Heart right ventricle (tissue), 16 donors: ENCODE measurements at regions of chr1 and their contacts with region 1.

Region 1: DNA sequence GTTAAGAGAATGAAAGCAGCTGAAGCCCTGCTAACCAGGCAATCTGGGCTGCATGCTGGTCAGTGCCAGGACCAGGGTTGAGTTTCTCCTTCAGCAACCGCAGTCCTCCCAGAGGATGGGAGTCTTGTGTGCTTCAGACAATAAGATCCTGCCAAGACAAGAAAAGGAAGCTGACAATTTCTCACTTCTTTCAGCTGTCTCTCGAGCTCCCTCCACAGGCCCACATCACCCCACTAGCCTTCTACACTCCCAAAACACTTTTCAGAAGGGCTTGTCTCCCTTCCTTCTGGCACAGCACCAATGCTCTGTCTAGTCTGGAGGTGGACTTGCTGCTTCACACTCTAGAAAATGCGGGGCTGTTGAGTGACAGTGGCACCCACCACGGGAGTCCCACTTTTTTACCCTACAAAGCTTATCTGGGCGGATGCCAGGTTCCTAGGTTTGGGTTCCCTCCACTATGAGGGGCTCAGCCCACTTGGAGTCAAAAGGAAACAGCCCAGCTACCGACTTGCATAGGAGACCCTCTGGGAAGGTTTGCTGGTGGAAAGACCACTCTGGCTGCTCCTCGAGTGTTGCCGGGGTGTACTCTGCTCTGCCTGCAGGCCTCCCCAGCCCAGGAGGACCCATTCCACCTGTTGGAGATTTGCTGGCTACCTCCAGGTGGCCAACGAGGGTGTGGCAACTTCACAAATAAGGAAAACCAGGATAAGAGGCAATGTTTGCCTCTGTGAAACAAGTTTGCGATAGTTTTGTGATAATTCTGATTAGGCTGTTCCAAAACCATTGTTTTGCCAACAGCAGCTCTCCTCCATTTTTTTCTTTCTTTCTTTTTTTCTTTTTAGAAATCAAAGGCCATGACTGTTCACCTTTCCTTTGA is 68.9 kb downstream of the TENT5C start:
- DNase-seq: no peak
- ATAC-seq: no peak
- H3K4me3 ChIP-seq: no peak overlapping the region
- H3K27ac ChIP-seq: peak overlapping the region in 4 of 10 donors; percentile 47 to 88 (median 66)
- H3K4me1 ChIP-seq: peaks cover 8 to 81% (median 41%) of the 10 kb centered on the region in 9 donors
- H3K27me3 ChIP-seq: no peaks in the 10 kb centered on the region
- CTCF ChIP-seq: peak in 4 of 9 donors; percentile 21 to 49 (median 35)

Region 2: GRCh38 chr1:116426401-116426800 is 1248.4 kb before region 1 on chr1:
- intact Hi-C with region 1: no loop called
- DNase-seq: no peak
- ATAC-seq: no peak
- H3K4me3 ChIP-seq: no peak overlapping the region
- H3K27ac ChIP-seq: no peak overlapping the region
- H3K4me1 ChIP-seq: peaks cover 0 to 12% (median 9%) of the 10 kb centered on the region in 9 donors
- H3K27me3 ChIP-seq: no peaks in the 10 kb centered on the region
- CTCF ChIP-seq: no peak

Region 3: GRCh38 chr1:117605774-117606648 is 68.7 kb before region 1 on chr1 and contains the start of gene TENT5C:
- intact Hi-C with region 1: loop called in 6 of 10 experiments (anchors 1 to 5 kb)
- DNase-seq: peak; percentile 97
- ATAC-seq: peak; percentile 96 to 99 (median 97)
- H3K4me3 ChIP-seq: peak within 1 kb of the TSS; percentile 57 to 94 (median 82)
- H3K27ac ChIP-seq: peak within 1 kb of the TSS in 9 of 10 donors; percentile 70 to 90 (median 82)
- H3K4me1 ChIP-seq: peaks cover 6 to 52% (median 30%) of the 10 kb centered on the region in 9 donors
- H3K27me3 ChIP-seq: peaks cover 0 to 4% (median 0%) of the 10 kb centered on the region in 7 donors
- CTCF ChIP-seq: no peak
- total RNA-seq, gene TENT5C: 3.1 to 23.1 (median 13.0) TPM

Region 4: GRCh38 chr1:117612517-117613248 is 62.1 kb before region 1 on chr1:
- intact Hi-C with region 1: loop called in 5 of 10 experiments (anchors 5 kb)
- DNase-seq: no peak
- ATAC-seq: peak in 6 of 8 donors; percentile 8 to 46 (median 36)
- H3K4me3 ChIP-seq: no peak overlapping the region
- H3K27ac ChIP-seq: peak overlapping the region in 7 of 10 donors; percentile 19 to 69 (median 37)
- H3K4me1 ChIP-seq: peaks cover 0 to 86% (median 44%) of the 10 kb centered on the region in 9 donors
- H3K27me3 ChIP-seq: no peaks in the 10 kb centered on the region
- CTCF ChIP-seq: no peak

Region 5: DNA sequence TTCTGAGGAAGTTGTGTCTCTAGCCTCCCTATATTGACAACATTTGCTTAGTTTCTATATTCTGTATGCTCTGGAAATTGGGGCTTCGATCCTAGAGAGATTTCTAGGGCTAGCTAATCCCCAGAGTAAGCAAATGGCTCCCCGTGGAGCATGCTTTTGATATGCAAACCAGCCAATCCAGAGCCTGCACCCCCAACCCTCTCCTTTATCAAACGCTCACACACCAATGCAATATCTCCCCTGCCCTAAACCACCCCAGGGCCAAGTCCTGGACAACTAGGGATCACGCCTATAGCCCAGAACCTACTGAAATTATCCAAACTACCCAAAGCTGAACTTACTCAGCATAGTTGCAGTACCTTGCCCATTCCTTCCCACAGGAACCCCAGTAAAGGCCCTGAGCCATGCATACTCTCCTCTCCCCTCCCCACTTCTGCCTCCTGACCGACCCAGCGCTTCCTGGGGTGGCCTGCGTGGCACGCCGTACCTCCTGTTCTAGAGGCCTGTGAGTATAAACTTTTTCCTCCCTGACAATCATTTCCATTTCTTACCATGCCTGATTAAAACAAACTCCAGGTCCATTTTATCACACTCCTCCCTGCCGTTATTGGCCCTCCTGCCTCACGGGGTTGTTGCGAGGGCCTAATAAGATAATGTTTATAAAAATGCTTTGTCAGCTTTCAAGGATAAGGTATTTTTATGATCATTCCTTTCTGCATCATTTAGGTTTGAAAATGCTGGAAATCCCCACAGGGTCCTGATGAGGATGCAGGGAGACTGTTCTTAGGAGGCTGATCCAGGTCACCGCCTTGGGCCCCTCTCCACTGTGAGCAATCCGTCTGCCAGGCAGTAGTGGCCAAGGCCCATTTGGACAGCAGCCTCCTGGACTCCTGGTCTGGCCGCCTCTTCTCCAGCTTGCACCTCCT is 33.8 kb after region 1 on chr1:
- intact Hi-C with region 1: loop called in 1 of 10 experiments (anchors 2 kb)
- DNase-seq: no peak
- ATAC-seq: no peak
- H3K4me3 ChIP-seq: no peak overlapping the region
- H3K27ac ChIP-seq: no peak overlapping the region
- H3K4me1 ChIP-seq: peaks cover 0 to 5% (median 0%) of the 10 kb centered on the region in 9 donors
- H3K27me3 ChIP-seq: no peaks in the 10 kb centered on the region
- CTCF ChIP-seq: no peak